ENCODE measurements at regions of chr12 and their contacts with region 1.

Region 1: GRCh38 chr12:110742718-110743570 is at the start of gene PPP1CC:
- DNase-seq: peak; percentile 82
- ATAC-seq: peak; percentile 94
- H3K4me3 Mint-ChIP-seq: peak within 1 kb of the TSS; percentile 98
- H3K27ac Mint-ChIP-seq: peak within 1 kb of the TSS; percentile 93
- H3K4me1 Mint-ChIP-seq: peaks cover 44% of the 10 kb centered on the region
- H3K27me3 Mint-ChIP-seq: no peaks in the 10 kb centered on the region
- CTCF ChIP-seq: no peak
- total RNA-seq, gene PPP1CC: 148 and 152 TPM in 2 replicates

Region 2: GRCh38 chr12:110726708-110727369 is 16.1 kb before region 1 on chr12:
- CTCF ChIA-PET with region 1: interaction called, 4 read pairs
- POLR2A ChIA-PET with region 1: interaction called, 23 read pairs
- intact Hi-C with region 1: loop called (anchors 2 kb)
- DNase-seq: no peak
- ATAC-seq: peak; percentile 24
- H3K4me3 Mint-ChIP-seq: peak overlapping the region; percentile 32
- H3K27ac Mint-ChIP-seq: peak overlapping the region; percentile 86
- H3K4me1 Mint-ChIP-seq: peaks cover 48% of the 10 kb centered on the region
- H3K27me3 Mint-ChIP-seq: no peaks in the 10 kb centered on the region
- CTCF ChIP-seq: no peak

Region 3: DNA sequence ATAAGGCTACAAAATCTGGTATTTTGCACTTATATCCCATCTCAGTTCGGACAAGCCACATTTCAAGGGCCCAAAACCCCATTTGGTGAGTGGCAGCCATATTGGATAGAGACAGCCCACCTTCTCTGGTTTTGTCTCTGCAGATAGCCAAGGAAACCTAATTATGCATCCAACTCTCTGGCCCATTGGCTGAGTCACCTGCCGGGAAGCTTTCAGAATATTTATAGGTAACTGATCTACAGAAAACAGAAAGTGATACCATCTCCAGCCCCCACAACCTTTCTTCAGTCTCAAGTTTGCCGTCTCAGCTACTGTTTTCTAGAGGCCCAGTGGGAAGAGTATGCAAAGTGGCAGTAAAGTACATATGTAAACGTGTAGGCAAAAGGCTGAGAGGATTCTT is 33.5 kb after region 1 on chr12:
- CTCF ChIA-PET with region 1: no interaction called
- POLR2A ChIA-PET with region 1: interaction called, 6 read pairs
- intact Hi-C with region 1: loop called (anchors 2 kb)
- DNase-seq: no peak
- ATAC-seq: peak; percentile 84
- H3K4me3 Mint-ChIP-seq: peak overlapping the region; percentile 36
- H3K27ac Mint-ChIP-seq: peak overlapping the region; percentile 74
- H3K4me1 Mint-ChIP-seq: peaks cover 28% of the 10 kb centered on the region
- H3K27me3 Mint-ChIP-seq: no peaks in the 10 kb centered on the region
- CTCF ChIP-seq: no peak